ENCODE measurements at regions of chr6 and their contacts with region 1.

Region 1: GRCh38 chr6:129709769-129710449 is at the start of gene ARHGAP18:
- DNase-seq: peak; percentile 97
- H3K4me3 ChIP-seq: peak within 1 kb of the TSS; percentile 60 to 90 (median 90)
- H3K27ac ChIP-seq: peak within 1 kb of the TSS; percentile 63
- H3K4me1 ChIP-seq: peaks cover 44% of the 10 kb centered on the region
- H3K27me3 ChIP-seq: no peaks in the 10 kb centered on the region
- CTCF ChIP-seq: no peak
- POLR2A ChIP-seq: peak; percentile 81
- total RNA-seq, gene ARHGAP18: 86.1 and 111 TPM in 2 replicates

Region 2: DNA sequence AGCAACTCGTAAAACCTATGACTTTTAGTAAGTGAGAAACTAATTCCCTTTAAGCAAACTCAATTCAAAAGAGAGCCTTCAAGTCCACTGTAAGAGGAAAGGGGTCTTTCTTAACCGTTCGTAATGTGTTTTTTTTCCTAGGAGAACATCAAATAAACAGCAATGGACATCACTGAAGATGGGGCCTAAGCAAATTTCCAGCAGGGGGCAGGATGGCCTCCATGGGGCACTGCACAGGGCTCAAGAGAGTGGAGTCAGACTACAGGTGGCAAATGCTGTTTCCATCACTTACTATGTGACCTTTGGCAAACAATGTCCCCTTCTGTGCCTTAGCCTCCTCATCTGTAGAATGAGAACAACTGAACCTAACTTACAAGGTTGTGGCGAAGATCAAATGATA is 88.7 kb before region 1 on chr6:
- CTCF ChIA-PET with region 1: interaction called, 4 read pairs
- POLR2A ChIA-PET with region 1: no interaction called
- dilution Hi-C with region 1: no loop called
- intact Hi-C with region 1: loop called (anchors 5 kb)
- DNase-seq: no peak
- H3K4me3 ChIP-seq: no peak overlapping the region
- H3K27ac ChIP-seq: no peak overlapping the region
- H3K4me1 ChIP-seq: peaks cover 27% of the 10 kb centered on the region
- H3K27me3 ChIP-seq: no peaks in the 10 kb centered on the region
- CTCF ChIP-seq: peak; percentile 27 to 28
- POLR2A ChIP-seq: no peak

Region 3: DNA sequence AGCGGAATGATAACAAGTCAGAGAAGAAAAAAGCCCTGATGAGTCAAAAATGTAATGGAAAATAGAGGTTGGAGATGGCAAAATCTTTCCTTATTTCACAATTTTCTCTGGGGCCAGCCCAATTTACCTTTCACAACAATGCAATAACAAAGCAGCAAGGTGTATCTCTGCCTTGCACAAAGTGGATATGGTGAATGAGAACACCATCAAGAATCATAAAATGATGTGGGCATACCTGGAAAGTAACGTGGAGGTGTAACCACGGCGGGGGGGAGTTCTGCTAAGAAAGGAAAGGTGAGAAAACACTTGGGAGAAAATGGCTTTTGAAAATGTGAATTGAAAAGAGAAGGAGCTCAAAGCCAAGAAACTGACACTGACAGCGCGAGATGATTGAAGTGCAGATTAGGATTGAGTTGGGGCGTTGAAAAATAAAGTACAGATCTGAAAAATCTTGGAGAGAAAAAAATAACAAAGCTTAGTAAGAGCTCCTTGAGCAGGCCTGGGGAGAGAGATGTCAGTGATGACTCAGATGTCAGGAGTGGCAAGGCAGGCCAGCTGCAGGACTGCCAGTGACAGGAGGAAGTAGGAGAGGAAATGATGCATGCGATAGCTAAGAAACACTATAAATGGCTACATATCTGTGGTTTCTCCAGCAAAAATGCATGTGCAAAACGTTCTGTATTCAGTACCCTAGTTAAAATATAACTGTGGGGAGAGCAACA is 26.1 kb before region 1 on chr6:
- CTCF ChIA-PET with region 1: interaction called, 6 read pairs
- POLR2A ChIA-PET with region 1: interaction called, 11 read pairs
- dilution Hi-C with region 1: no loop called
- intact Hi-C with region 1: loop called (anchors 1 kb)
- DNase-seq: peak; percentile 97
- H3K4me3 ChIP-seq: peak overlapping the region in 1 of 3 experiments; percentile 6
- H3K27ac ChIP-seq: peak overlapping the region; percentile 98
- H3K4me1 ChIP-seq: peaks cover 77% of the 10 kb centered on the region
- H3K27me3 ChIP-seq: no peaks in the 10 kb centered on the region
- CTCF ChIP-seq: no peak
- POLR2A ChIP-seq: peak; percentile 82

Region 4: GRCh38 chr6:129730477-129731165 is 20.7 kb after region 1 on chr6:
- CTCF ChIA-PET with region 1: interaction called, 15 read pairs
- POLR2A ChIA-PET with region 1: interaction called, 4 read pairs
- dilution Hi-C with region 1: no loop called
- intact Hi-C with region 1: no loop called
- DNase-seq: peak; percentile 63
- H3K4me3 ChIP-seq: no peak overlapping the region
- H3K27ac ChIP-seq: no peak overlapping the region
- H3K4me1 ChIP-seq: peaks cover 7% of the 10 kb centered on the region
- H3K27me3 ChIP-seq: no peaks in the 10 kb centered on the region
- CTCF ChIP-seq: peak; percentile 29 to 40
- POLR2A ChIP-seq: no peak

Measured in endothelial cell of umbilical vein (primary cell).